Head of caudate nucleus (tissue), 42 donors: ENCODE measurements at regions of chr11 and their contacts with region 1.

Region 1: DNA sequence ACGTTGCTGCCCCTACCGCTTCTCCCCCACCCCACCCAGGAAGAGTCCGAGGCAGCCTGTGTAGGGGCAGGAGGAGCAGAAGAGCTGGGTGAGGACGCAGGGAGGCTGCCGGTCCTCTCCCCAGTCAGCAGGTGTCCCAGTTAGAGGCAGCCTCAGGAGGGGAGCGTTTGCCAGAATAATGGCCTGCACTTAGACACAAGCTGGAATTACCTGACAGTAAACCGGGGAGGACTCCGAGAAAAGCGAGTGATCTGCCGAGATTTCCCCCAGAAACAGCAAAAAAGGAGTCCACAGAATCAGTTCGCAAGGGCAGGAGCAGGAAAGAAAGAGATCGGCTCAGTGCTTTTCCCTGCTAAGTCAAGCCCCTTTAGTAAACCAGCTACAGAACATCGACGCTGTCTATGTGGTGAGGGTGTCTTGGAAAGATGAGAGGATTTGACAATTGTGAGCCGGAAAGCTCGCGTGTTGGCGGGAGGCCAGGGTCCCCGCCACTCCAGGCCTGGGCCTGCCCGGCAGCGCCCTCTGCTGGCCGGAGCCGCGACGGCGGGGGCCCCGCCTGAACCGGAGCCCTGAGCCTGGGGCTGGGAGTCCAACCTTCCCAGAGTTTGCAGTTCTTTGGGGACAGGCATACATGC is 17.7 kb upstream of the THRSP start:
- DNase-seq: peak; percentile 66 to 96 (median 89)

Region 2: GRCh38 chr11:77820563-77821348 is 225.2 kb before region 1 on chr11 and contains the starts of genes AAMDC and RSF1:
- intact Hi-C with region 1: loop called (anchors 5 kb)
- DNase-seq: peak; percentile 98 to 100 (median 99)

Region 3: GRCh38 chr11:77994412-77995362 is 51.3 kb before region 1 on chr11 and contains the start of gene INTS4:
- intact Hi-C with region 1: loop called (anchors 2 kb)
- DNase-seq: peak; percentile 95 to 100 (median 100)